Caki2 (cell line): ENCODE measurements at regions of chr3 and their contacts with region 1.

Region 1: DNA sequence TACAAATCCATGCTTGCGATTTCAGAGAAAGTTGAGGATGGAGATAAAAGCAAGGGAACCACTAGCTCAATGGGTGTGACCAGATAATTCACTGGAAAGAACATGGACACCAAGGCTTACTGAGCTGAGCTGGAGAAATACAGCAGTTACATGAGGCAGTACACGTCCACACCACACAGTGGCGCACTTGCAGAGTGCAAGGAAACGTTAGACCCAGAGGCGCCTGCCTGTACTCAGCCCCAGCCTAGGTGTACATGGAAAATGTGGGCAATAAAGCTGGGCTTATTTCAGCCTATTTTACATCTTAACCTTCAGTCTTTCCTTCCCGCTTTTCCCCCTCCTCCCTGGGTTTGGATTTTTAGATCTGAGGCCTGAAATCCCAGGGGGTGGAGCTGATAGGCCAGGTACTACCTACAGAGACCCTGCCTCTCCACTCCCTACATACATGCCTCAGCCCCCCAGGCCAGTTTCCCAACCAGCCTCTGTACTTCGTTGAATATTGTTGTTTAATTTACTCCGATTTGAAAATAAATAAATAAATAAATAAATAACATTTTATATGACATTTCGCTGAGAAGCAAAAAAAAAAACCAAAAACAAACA is 60.1 kb downstream of the PCOLCE2 start:
- DNase-seq: peak; percentile 65

Region 2: GRCh38 chr3:142568393-142569017 is 260.3 kb before region 1 on chr3:
- in situ Hi-C with region 1: no loop called
- DNase-seq: no peak

Region 3: GRCh38 chr3:143001369-143002082 is 172.7 kb after region 1 on chr3 and contains the start of gene U2SURP:
- in situ Hi-C with region 1: loop called (anchors 25 kb)
- DNase-seq: peak; percentile 96
- total RNA-seq, gene U2SURP: 34.3 and 36.3 TPM in 2 replicates